HepG2 (cell line): ENCODE measurements at regions of chr1 and their contacts with region 1.

Region 1: GRCh38 chr1:118151312-118151937 is 33.6 kb downstream of the SPAG17 start:
- DNase-seq: peak; percentile 23
- ATAC-seq: no peak
- H3K4me3 ChIP-seq: no peak overlapping the region
- H3K27ac ChIP-seq: no peak overlapping the region
- H3K4me1 ChIP-seq: no peaks in the 10 kb centered on the region
- H3K27me3 ChIP-seq: no peaks in the 10 kb centered on the region
- CTCF ChIP-seq: peak; percentile 67
- EP300 ChIP-seq: no peak
- POLR2A ChIP-seq: no peak
- RAD21 ChIP-seq: no peak

Region 2: GRCh38 chr1:118077331-118078055 is 73.9 kb before region 1 on chr1:
- CTCF ChIA-PET with region 1: interaction called, 3 read pairs
- POLR2A ChIA-PET with region 1: no interaction called
- in situ Hi-C with region 1: no loop called
- intact Hi-C with region 1: loop called (anchors 1 kb)
- DNase-seq: peak; percentile 15
- ATAC-seq: no peak; the same call in 2 of the 3 replicates
- H3K4me3 ChIP-seq: no peak overlapping the region
- H3K27ac ChIP-seq: no peak overlapping the region
- H3K4me1 ChIP-seq: no peaks in the 10 kb centered on the region
- H3K27me3 ChIP-seq: no peaks in the 10 kb centered on the region
- CTCF ChIP-seq: peak; percentile 39; the same call in 1 of the 2 replicates
- EP300 ChIP-seq: no peak
- POLR2A ChIP-seq: no peak
- RAD21 ChIP-seq: no peak

Region 3: DNA sequence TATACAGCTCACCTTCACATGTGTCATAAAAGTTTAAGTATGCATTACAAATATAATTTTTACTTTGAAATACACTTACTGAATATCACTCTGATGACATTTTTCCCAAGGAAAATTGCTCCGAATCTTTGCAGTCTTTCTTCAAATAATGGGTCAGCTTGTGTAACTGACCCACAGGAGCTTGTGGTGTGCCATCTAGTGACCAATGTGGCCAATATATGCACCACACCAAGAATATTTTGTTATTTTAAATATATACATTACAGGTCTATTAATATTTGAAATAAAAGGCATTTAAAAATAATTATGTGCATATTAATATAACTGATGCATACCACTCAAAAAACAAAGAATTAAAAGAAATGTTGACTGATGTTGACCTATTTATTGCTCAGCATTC is 565.4 kb after region 1 on chr1:
- CTCF ChIA-PET with region 1: no interaction called
- POLR2A ChIA-PET with region 1: no interaction called
- in situ Hi-C with region 1: no loop called
- intact Hi-C with region 1: loop called (anchors 10 kb)
- DNase-seq: peak; percentile 1
- ATAC-seq: no peak
- H3K4me3 ChIP-seq: no peak overlapping the region
- H3K27ac ChIP-seq: no peak overlapping the region
- H3K4me1 ChIP-seq: no peaks in the 10 kb centered on the region
- H3K27me3 ChIP-seq: no peaks in the 10 kb centered on the region; a peak in 1 of 5 replicates
- CTCF ChIP-seq: no peak
- EP300 ChIP-seq: no peak
- POLR2A ChIP-seq: no peak
- RAD21 ChIP-seq: no peak

Region 4: GRCh38 chr1:118960026-118960561 is 808.7 kb after region 1 on chr1:
- CTCF ChIA-PET with region 1: no interaction called
- POLR2A ChIA-PET with region 1: no interaction called
- in situ Hi-C with region 1: no loop called
- intact Hi-C with region 1: no loop called
- DNase-seq: no peak
- ATAC-seq: no peak
- H3K4me3 ChIP-seq: peak overlapping the region in 1 of 3 experiments; percentile 16; a peak in 1 of 6 replicates
- H3K27ac ChIP-seq: peak overlapping the region; percentile 98
- H3K4me1 ChIP-seq: peaks cover 73% of the 10 kb centered on the region
- H3K27me3 ChIP-seq: no peaks in the 10 kb centered on the region
- CTCF ChIP-seq: no peak
- EP300 ChIP-seq: no peak
- POLR2A ChIP-seq: no peak
- RAD21 ChIP-seq: no peak

Region 5: GRCh38 chr1:119275145-119276134 is 1124.0 kb after region 1 on chr1:
- CTCF ChIA-PET with region 1: no interaction called
- POLR2A ChIA-PET with region 1: no interaction called
- in situ Hi-C with region 1: no loop called
- intact Hi-C with region 1: loop called (anchors 5 kb)
- DNase-seq: peak; percentile 45
- ATAC-seq: peak; percentile 85
- H3K4me3 ChIP-seq: no peak overlapping the region
- H3K27ac ChIP-seq: no peak overlapping the region
- H3K4me1 ChIP-seq: no peaks in the 10 kb centered on the region
- H3K27me3 ChIP-seq: no peaks in the 10 kb centered on the region; a peak in 1 of 5 replicates
- CTCF ChIP-seq: peak; percentile 74
- EP300 ChIP-seq: no peak
- POLR2A ChIP-seq: no peak
- RAD21 ChIP-seq: no peak